Mucosa of descending colon (tissue), 3 donors: ENCODE measurements at regions of chr7 and their contacts with region 1.

Region 1: GRCh38 chr7:26365077-26365900 is 73.6 kb downstream of the SNX10 start:
- DNase-seq: peak in 2 of 3 donors; percentile 36 to 79
- ATAC-seq: peak; percentile 94
- H3K4me3 ChIP-seq: no peak overlapping the region
- H3K4me1 ChIP-seq: no peaks in the 10 kb centered on the region
- CTCF ChIP-seq: peak; percentile 19

Region 2: GRCh38 chr7:25886387-25887240 is 478.7 kb before region 1 on chr7:
- intact Hi-C with region 1: loop called (anchors 5 kb)
- DNase-seq: no peak
- ATAC-seq: no peak
- H3K4me3 ChIP-seq: no peak overlapping the region
- H3K4me1 ChIP-seq: no peaks in the 10 kb centered on the region
- CTCF ChIP-seq: no peak

Region 3: GRCh38 chr7:25894902-25895791 is 470.1 kb before region 1 on chr7:
- intact Hi-C with region 1: loop called in 1 of 2 experiments (anchors 5 kb)
- DNase-seq: peak; percentile 81 to 84 (median 82)
- ATAC-seq: peak; percentile 82
- H3K4me3 ChIP-seq: no peak overlapping the region
- H3K4me1 ChIP-seq: peaks cover 12% of the 10 kb centered on the region
- CTCF ChIP-seq: peak; percentile 72

Region 4: DNA sequence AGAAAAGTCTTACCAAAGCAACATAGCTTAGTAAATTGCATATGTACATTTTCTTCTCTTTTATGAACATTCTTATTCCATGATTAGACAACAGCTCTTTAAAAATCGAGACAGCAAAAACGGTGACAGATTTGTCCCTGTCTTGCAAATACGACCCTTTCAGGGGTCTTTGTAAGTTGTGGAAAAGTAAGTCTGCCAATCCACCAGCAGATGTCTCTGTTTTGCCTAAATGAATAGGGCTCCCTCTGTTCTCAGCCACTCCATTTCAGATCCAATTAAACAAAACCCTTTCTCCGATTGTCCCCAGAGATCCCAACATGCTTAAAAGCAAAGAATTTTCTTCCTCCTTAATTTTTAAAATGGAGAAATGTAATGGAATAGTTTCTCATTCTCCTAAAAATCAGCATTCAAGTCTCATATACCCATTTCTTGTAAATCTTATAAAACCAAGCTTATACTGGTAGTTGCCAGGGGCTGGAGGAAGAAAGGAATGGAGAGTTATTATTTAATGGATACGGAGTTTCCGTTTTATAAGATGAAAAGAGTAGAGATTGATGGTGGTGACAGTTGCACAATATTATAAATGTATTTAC is 274.3 kb before region 1 on chr7:
- intact Hi-C with region 1: loop called (anchors 5 to 10 kb)
- DNase-seq: peak in 1 of 3 donors; percentile 39
- ATAC-seq: peak; percentile 65
- H3K4me3 ChIP-seq: no peak overlapping the region
- H3K4me1 ChIP-seq: no peaks in the 10 kb centered on the region
- CTCF ChIP-seq: peak; percentile 38

Region 5: DNA sequence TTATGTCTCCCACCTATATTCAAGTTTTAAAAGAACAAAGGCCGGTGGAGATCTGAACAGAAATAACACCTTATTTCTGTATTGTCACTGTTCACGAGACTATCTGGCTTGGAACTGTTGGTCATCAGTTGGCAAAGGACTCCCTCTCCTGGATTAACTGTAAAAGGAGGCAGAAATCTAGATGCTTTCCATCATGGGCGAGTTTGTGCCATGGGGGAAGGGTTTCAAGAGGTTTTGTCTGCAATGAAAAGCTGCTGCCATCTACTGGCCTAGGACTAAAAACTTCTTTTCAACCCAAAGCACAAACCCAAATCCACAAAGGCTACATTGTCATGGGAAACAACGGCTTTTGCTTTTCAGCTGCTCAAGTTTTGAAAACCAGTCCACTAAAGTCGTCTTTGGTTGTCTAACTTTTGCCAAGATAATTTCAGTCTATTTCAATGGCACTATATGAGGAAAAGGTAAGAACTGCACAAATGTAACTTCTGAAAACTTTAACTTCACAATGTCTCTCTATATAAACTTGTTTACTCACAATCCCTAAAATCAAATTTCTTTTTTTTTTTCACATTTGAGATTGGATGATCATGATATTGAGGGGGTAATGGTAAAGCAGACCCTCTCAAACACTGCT is 302.3 kb after region 1 on chr7:
- intact Hi-C with region 1: loop called in 1 of 2 experiments (anchors 5 kb)
- DNase-seq: peak in 2 of 3 donors; percentile 34 to 76
- ATAC-seq: peak; percentile 96
- H3K4me3 ChIP-seq: no peak overlapping the region
- H3K4me1 ChIP-seq: no peaks in the 10 kb centered on the region
- CTCF ChIP-seq: peak; percentile 38

Region 6: DNA sequence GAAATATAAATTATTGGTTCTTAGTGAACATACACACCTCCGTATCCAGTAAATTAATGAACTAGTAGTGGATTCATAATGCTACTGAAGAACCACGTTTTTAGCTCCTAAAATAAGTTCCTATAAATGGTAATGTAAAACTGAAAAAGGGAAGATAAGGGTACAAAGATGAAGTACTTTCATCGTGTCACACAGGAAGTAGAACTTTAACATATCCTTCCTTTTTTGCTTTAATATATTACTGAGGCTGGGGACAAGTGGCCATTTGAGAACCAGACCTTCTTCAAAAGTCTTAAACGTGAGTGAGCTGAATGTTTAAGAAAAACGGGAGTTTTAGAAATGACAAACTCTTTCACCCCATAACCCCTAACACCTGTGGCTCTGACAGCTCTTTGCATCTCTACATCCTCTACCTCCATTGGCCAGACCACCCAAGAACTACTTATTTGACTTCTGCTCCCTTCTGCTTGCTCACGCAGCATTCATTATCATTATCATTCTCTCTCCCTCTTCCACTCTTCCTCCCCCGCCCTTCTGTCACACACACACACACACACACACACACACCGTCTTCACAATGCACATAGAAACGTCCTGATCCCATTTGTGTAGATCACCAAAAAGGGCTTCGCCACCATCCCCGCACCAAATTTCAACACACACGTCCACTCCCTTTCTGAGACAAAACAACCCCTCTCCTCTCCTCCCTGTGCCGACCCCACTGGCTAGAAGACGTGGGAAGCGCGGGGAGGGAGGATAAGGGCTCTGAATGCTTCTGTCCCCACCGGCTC is 498.4 kb after region 1 on chr7:
- intact Hi-C with region 1: no loop called
- DNase-seq: peak in 1 of 3 donors; percentile 78
- ATAC-seq: peak; percentile 56
- H3K4me3 ChIP-seq: peak overlapping the region; percentile 54
- H3K4me1 ChIP-seq: peaks cover 24% of the 10 kb centered on the region
- CTCF ChIP-seq: no peak

Region 7: DNA sequence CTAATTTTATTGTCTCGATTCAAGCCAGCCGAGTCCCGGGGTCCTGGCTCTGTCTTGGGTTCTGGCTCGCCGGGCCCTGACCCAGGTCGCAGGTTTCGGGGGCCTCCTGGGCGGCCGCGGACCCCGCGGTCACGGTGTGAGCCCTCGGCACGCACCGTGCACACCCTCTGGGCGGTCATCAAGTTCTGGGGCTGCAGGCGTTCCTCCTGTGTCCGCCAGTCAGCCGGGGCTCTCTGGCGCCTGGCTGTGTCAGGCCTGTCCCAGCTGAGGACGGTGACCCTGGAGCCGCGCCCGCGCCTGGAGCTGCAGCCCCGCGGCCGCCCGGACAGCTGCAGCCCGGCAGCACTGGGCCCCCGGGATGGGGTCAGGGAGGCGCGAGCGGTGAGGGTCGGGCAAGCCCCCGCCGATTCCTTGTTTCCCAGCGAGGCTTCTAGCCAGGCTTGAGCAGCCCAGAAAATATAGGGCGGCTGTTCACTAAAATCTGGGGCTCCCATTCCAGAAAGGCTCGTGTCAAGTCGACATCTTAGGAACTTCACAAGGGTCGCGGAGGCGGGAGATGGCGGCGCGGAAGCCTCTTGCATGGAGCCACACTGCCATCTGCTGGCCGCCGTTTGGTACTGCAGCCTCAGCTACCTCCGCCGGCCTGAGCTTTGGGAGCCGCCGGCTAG is 795.4 kb after region 1 on chr7:
- intact Hi-C with region 1: loop called (anchors 5 to 10 kb)
- DNase-seq: peak; percentile 93 to 94 (median 94)
- ATAC-seq: peak; percentile 70
- H3K4me3 ChIP-seq: peak overlapping the region; percentile 15
- H3K4me1 ChIP-seq: peaks cover 19% of the 10 kb centered on the region
- CTCF ChIP-seq: peak; percentile 99